HEK293T (cell line): ENCODE measurements at regions of chr11 and their contacts with region 1.

Region 1: GRCh38 chr11:125568970-125569914 is at the start of gene EI24:
- DNase-seq: peak; percentile 93

Region 2: DNA sequence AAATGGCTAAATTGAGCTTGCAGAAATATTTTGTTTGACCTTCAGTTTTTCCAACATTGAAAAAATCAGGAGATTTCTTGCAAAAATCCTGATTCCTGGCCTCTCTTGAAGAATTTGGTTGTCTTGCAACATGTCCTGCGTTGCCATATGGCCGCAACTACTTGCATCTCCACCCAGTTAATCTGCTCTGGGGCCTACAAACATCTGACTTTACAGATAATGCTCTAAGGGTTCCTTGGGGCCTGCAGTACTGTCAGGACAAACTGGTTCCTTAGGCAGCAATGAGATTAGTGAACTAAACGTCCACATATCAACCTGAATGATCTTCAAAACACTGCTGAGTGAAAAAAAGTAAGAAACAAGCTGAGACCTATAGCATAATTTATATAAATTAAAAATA is 36.6 kb before region 1 on chr11:
- CTCF ChIA-PET with region 1: no interaction called
- POLR2A ChIA-PET with region 1: no interaction called
- DNase-seq: no peak

Region 3: DNA sequence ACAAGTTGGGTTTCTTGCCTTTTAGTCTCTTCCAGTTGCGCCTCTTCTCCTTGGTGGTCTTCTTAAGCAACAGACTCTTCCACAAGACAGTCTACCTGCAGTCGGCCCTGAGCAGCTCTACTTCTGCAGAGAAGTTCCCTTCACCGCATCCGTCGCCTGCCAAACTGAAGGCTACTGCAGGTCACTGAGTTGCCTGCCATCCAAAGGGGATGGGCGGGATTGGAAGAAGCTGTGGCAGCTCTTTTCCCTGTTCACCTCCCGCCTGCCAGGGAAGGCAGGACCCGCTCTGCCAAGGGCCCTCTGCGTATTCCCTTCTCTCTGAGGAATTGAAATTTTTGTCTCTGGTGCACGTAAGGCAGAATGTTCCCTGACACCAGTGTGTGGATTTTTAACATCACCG is 14.3 kb after region 1 on chr11:
- CTCF ChIA-PET with region 1: no interaction called
- POLR2A ChIA-PET with region 1: interaction called, 11 read pairs
- DNase-seq: no peak

Region 4: DNA sequence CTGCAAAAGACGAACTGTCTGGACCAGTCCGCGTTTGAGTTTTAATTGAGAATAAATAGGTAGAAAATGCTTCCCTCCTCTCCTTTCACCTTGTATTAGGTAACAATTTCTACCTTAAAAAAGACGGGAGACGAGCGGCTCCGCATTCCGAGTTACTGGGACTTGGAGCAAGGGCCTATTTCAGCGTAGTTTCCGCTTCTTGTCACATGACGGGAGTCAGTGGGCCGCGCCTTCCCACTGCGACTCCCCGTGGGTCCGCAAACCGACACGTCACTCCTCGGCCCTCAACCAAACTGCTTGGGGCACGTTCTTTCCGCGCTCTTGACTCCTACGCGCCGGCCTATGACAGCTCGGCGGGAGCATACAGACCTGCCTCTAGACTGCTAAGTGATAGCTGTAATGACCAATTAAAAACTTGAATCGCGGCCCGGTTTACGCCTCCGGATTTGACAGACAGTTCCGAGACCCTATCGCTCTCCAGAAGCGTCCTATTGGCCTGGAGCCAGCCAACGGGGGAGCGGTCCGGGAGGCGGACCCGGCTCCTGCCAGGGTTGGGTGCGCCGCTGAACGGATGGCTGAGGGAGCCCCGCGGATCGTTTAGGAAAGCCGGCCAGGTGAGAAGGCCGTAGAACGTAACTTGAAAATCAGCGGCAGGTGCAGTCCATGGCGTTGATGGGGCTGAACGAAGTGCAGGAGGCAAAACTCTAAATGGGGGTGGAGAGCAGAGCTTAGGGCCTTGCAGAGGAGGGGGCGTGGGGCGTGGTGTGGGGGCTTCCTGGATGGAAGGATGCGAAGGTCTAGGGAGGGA is 23.3 kb after region 1 on chr11 and contains the start of gene STT3A:
- CTCF ChIA-PET with region 1: no interaction called
- POLR2A ChIA-PET with region 1: interaction called, 11 read pairs
- DNase-seq: peak; percentile 95